HCT116 (cell line): ENCODE measurements at regions of chr4 and their contacts with region 1.

Region 1: DNA sequence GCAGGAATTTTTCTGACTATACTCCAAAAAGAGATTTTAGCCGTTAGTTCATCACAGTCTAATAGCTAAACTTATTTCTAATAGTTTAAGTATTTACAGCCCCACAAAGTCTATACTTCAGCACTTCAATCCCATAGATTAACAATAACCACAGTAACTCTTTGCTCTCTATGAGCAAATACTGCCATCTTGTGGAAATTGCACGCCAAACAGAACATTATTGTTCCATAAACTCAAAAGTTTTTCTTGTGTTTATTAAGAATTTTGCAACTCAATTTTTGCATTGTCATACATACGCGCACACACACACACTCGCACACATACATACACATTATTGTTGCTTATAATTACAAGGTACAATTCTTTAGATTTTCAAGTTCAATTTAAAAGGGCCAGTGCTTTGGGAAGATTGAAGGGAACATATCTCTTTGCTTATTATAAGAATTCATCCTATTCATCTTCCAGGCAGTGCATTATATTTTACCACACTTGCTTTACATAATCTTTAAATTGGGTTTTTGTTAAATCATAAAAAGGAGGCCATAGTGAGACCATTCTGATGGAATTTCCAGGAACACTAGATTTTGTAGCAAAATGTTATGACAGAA is 63.8 kb upstream of the ATOH1 start:
- DNase-seq: peak; percentile 40
- ATAC-seq: peak; percentile 80
- H3K4me3 ChIP-seq: no peak overlapping the region
- H3K27ac ChIP-seq: no peak overlapping the region
- H3K4me1 ChIP-seq: no peaks in the 10 kb centered on the region
- H3K27me3 ChIP-seq: no peaks in the 10 kb centered on the region
- CTCF ChIP-seq: peak; percentile 60 to 85 (median 61); a peak in 5 of 6 replicates
- POLR2A ChIP-seq: no peak
- RAD21 ChIP-seq: peak; percentile 92

Region 2: GRCh38 chr4:92172203-92172602 is 1592.5 kb before region 1 on chr4:
- CTCF ChIA-PET with region 1: no interaction called
- POLR2A ChIA-PET with region 1: no interaction called
- RAD21 ChIA-PET with region 1: no interaction called
- intact Hi-C with region 1: loop called (anchors 10 kb)
- DNase-seq: no peak
- ATAC-seq: 0 out of 2 replicates have a peak, but pooled peaks have one; percentile 53
- H3K4me3 ChIP-seq: no peak overlapping the region
- H3K27ac ChIP-seq: no peak overlapping the region
- H3K4me1 ChIP-seq: no peaks in the 10 kb centered on the region
- H3K27me3 ChIP-seq: no peaks in the 10 kb centered on the region
- CTCF ChIP-seq: peak in 1 of 3 experiments; percentile 38; a peak in 2 of 6 replicates
- POLR2A ChIP-seq: no peak
- RAD21 ChIP-seq: peak; percentile 38; the same call in 1 of the 2 replicates

Region 3: GRCh38 chr4:93710101-93710846 is 54.5 kb before region 1 on chr4:
- CTCF ChIA-PET with region 1: interaction called, 4 read pairs
- POLR2A ChIA-PET with region 1: no interaction called
- RAD21 ChIA-PET with region 1: no interaction called
- intact Hi-C with region 1: loop called (anchors 2 kb)
- DNase-seq: peak; percentile 35
- ATAC-seq: peak; percentile 89
- H3K4me3 ChIP-seq: no peak overlapping the region
- H3K27ac ChIP-seq: no peak overlapping the region
- H3K4me1 ChIP-seq: no peaks in the 10 kb centered on the region
- H3K27me3 ChIP-seq: no peaks in the 10 kb centered on the region
- CTCF ChIP-seq: peak; percentile 31 to 65 (median 38); a peak in 4 of 6 replicates
- POLR2A ChIP-seq: no peak
- RAD21 ChIP-seq: peak; percentile 72